Ovary (tissue), 10 donors: ENCODE measurements at regions of chr22 and their contacts with region 1.

Region 1: DNA sequence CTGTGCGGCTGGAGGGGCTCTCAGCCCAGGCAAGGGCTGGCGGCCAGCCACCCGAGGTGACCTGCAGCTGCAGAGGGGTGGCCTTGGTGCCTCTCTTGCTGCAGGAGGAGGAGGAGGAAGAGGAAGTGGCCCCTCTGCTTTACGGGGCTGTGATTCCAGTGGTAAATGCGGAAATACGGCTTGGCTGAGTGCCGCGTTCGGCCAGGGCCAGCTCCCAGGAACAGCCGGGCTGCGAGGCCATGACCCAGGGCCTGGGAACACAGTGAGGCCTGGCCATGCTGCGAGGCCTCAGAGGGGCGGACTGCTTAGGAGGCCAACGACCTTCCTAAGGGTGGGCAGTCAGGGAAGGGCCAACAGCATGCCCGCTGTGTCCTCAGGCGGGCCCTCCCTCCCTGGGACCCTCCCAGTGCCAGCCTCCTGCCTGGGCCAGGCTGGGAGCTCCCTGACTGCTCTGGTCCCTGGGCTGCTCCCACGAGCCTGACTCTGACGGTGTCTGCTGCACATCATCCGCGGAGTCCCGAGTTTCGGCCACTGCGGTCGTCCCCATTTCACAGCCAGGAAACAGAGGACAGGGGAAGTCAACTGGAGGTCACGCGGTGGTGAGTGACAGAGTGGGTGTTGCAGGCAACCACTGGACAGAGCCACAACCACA is 20.8 kb upstream of the PPARA start:
- DNase-seq: peak; percentile 72 to 94 (median 84)
- H3K4me3 ChIP-seq: no peak overlapping the region
- H3K27ac ChIP-seq: peak overlapping the region; percentile 30 to 78
- H3K4me1 ChIP-seq: peaks cover 8% of the 10 kb centered on the region
- H3K27me3 ChIP-seq: no peaks in the 10 kb centered on the region
- CTCF ChIP-seq: no peak
- EP300 ChIP-seq: no peak
- POLR2A ChIP-seq: no peak

Region 2: DNA sequence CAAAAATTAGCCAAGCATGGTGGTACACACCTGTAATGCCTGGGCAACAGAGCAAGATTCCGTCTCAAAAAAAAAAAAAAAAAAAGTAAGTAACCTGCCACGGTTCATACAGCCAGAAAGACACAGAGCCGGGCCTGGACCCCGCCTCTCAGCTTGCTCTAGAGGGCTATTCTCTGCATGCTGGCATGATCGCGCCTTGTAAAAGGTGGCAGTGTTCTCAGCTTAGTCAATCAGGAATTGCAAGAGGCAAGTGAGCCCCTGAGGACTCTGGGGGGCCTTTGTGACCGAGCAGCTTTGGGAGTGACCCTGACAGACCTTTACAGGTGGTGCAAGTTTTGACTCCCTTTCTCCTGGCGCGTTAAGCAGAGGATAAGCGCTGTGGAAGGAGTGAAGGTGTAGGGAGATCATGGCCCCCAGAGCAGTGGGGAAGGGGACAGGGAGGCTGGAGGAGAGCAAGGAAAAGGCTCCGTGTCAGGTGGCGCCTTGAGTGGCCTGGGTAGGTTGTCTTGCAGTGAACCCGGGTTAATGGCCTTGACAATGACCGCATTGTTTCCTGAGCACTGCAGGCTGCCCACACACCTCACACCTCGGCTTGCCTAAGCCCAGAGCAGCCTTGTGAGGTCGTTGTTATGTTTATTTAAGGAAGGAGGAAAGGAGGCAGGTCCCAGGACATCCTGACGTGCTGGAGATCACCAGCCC is 71.7 kb after region 1 on chr22:
- intact Hi-C with region 1: no loop called
- DNase-seq: no peak
- H3K4me3 ChIP-seq: no peak overlapping the region
- H3K27ac ChIP-seq: no peak overlapping the region
- H3K4me1 ChIP-seq: peaks cover 1% of the 10 kb centered on the region
- H3K27me3 ChIP-seq: no peaks in the 10 kb centered on the region
- CTCF ChIP-seq: no peak
- EP300 ChIP-seq: no peak
- POLR2A ChIP-seq: no peak

Region 3: DNA sequence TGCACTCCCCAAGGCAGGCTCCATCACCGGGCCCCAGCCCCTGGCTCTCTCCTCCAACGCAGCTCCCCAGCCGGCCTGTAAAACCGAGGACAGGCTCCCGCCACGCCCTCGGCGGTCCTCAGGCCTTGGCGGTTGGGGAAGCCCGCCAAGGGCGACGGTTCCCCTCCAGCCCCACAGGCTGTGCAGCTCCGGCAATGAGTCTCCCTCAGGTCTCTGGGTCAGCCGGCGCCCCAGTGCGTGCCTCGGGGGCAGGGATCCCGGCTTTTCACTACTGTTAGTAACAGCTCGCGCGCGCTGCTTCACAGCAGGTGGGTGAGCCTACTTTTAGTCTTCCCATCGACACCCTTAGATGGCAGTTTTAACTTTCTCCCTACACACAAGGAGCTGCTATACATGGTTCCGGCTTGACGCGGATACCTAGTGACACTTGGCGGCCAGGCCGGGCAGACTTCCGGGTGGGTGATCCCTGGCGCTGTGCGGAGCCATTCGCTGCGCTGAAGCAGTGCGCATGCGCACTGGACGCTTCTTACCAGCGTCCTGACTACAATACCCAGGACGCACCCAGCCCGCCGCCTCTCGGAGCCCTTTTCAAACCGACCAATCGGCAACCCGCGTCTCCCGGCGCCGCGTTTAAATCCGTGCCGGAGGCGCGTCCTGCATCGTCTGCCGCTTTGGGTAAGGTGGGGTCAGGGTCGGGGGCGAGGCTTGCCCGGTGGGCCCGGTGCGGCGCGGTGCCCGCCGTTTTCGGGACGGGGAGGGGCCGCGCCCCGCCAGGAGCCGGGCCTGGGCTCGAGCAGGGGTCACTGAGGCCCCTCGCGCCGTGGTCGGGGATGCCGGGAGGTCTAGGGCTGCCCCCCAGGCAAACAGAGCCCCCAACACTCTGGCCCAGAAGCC is 167.0 kb after region 1 on chr22 and contains the start of gene GTSE1:
- intact Hi-C with region 1: loop called in 1 of 4 experiments (anchors 5 kb)
- DNase-seq: peak; percentile 96 to 98 (median 97)
- H3K4me3 ChIP-seq: peak within 1 kb of the TSS; percentile 44
- H3K27ac ChIP-seq: peak within 1 kb of the TSS; percentile 37 to 81
- H3K4me1 ChIP-seq: peaks cover 5% of the 10 kb centered on the region
- H3K27me3 ChIP-seq: no peaks in the 10 kb centered on the region
- CTCF ChIP-seq: no peak
- EP300 ChIP-seq: no peak
- POLR2A ChIP-seq: no peak
- total RNA-seq, gene GTSE1: 0.18 to 0.84 (median 0.34) TPM in 6 of 7 donors, not detected in the other

Region 4: DNA sequence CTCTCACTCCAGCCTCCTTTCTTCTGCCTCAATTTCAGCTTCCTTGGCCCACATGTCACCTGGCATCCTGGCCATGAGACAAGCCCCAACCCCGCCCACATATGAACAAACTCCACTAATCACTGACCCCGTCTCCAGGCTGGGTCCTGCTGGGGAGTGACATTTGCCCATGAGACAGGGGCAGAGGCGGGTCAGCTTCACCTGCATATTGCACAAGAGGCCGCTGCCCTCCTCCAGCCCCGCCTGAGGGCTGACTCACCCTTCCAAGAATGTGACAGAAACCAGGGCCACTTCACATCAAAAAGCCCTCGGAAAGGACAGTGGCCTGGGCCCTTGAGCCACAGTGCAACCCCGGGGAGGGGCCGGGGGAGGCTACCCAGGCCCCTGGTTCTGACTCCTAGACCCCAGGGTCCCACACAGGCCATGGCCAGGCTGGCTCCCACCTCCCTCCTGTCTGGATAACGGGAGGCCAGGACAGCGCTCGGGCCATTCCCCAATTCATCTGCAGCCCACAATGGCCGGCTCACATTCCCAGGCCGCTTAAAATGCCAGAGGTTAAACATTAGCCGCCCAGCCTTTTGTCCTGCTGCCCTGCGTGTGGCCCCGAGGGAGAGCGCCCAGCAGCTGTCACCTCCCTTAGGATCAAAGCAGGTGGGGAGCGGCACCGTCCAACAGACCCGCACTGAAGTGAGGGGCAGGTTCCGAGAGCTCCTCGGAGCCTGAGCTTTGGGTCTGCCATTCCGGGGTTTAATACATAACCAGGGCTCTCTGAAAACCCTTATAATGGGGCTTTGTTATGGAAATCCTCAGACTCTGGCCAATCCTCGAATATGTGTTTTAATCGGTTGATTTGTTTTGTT is 248.3 kb after region 1 on chr22:
- intact Hi-C with region 1: no loop called
- DNase-seq: peak in 1 of 5 donors; percentile 13
- H3K4me3 ChIP-seq: no peak overlapping the region
- H3K27ac ChIP-seq: no peak overlapping the region
- H3K4me1 ChIP-seq: no peaks in the 10 kb centered on the region
- H3K27me3 ChIP-seq: no peaks in the 10 kb centered on the region
- CTCF ChIP-seq: no peak
- EP300 ChIP-seq: no peak
- POLR2A ChIP-seq: no peak